CD8-positive, alpha-beta T cell (primary cell): ENCODE measurements at regions of chr1 and their contacts with region 1.

Region 1: GRCh38 chr1:54406339-54407153 is at the start of gene SSBP3:
- DNase-seq: peak; percentile 79 to 96 (median 92)
- ATAC-seq: peak; percentile 90
- H3K4me3 ChIP-seq: peak within 1 kb of the TSS; percentile 81 to 88
- H3K4me3 Mint-ChIP-seq: peak within 1 kb of the TSS; percentile 96
- H3K27ac ChIP-seq: peak within 1 kb of the TSS; percentile 55 to 76
- H3K27ac Mint-ChIP-seq: peak within 1 kb of the TSS; percentile 91
- H3K4me1 ChIP-seq: peaks cover 57% of the 10 kb centered on the region
- H3K4me1 Mint-ChIP-seq: peaks cover 64% of the 10 kb centered on the region
- H3K27me3 ChIP-seq: no peaks in the 10 kb centered on the region
- H3K27me3 Mint-ChIP-seq: no peaks in the 10 kb centered on the region
- CTCF ChIP-seq: no peak
- total RNA-seq, gene SSBP3: 41.5 to 47.7 TPM

Region 2: GRCh38 chr1:53014791-53015507 is 1391.6 kb before region 1 on chr1:
- CTCF ChIA-PET with region 1: no interaction called
- POLR2A ChIA-PET with region 1: no interaction called
- intact Hi-C with region 1: loop called in 1 of 2 experiments (anchors 10 kb)
- DNase-seq: peak; percentile 51 to 94 (median 79)
- ATAC-seq: peak; percentile 100
- H3K4me3 ChIP-seq: peak overlapping the region; percentile 67 to 68
- H3K4me3 Mint-ChIP-seq: peak overlapping the region; percentile 84
- H3K27ac ChIP-seq: peak overlapping the region; percentile 42 to 48
- H3K27ac Mint-ChIP-seq: peak overlapping the region; percentile 79
- H3K4me1 ChIP-seq: peaks cover 21% of the 10 kb centered on the region
- H3K4me1 Mint-ChIP-seq: peaks cover 38% of the 10 kb centered on the region
- H3K27me3 ChIP-seq: no peaks in the 10 kb centered on the region
- H3K27me3 Mint-ChIP-seq: no peaks in the 10 kb centered on the region
- CTCF ChIP-seq: no peak

Region 3: GRCh38 chr1:53889304-53890298 is 516.9 kb before region 1 on chr1 and contains the start of gene YIPF1:
- CTCF ChIA-PET with region 1: no interaction called
- POLR2A ChIA-PET with region 1: no interaction called
- intact Hi-C with region 1: loop called in 1 of 2 experiments (anchors 10 kb)
- DNase-seq: peak; percentile 68 to 92 (median 86)
- ATAC-seq: peak; percentile 98
- H3K4me3 ChIP-seq: peak within 1 kb of the TSS; percentile 69 to 97
- H3K4me3 Mint-ChIP-seq: peak within 1 kb of the TSS; percentile 94
- H3K27ac ChIP-seq: peak within 1 kb of the TSS; percentile 42 to 56
- H3K27ac Mint-ChIP-seq: peak within 1 kb of the TSS; percentile 94
- H3K4me1 ChIP-seq: peaks cover 19% of the 10 kb centered on the region
- H3K4me1 Mint-ChIP-seq: peaks cover 49% of the 10 kb centered on the region
- H3K27me3 ChIP-seq: no peaks in the 10 kb centered on the region
- H3K27me3 Mint-ChIP-seq: no peaks in the 10 kb centered on the region
- CTCF ChIP-seq: no peak
- total RNA-seq, gene YIPF1: 4.6 to 5.4 TPM

Region 4: DNA sequence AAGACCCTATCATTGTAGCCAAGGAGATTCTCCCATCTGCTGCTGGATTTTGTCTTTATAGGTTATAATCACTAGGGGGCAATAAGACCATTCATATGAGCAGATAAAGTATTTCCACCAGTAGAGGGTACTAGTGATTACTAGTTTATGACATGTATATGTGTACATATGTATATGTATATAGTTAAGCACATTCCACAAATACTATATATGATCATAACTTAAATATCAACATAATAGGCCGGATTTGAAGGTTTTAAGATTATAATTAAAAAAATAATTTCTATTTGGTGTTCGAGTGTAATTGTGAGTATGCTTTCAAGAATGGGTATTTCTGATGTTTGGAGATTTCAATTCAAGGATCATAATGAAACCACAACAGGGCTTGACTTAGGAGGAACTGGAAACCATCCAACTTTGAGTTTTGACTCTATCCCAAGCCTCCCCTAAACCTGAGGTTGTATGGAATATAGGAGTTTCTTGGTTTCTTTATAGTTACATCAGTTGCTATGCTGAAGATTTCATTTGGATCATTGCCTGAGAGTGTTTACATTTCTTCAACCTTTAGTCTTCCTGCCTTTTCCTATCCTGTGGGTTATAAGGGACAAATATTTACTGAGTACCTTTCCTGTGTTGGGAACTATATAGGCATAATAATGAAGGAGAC is 336.2 kb before region 1 on chr1:
- CTCF ChIA-PET with region 1: no interaction called
- POLR2A ChIA-PET with region 1: no interaction called
- intact Hi-C with region 1: loop called (anchors 5 kb)
- DNase-seq: peak in 2 of 9 experiments; percentile 62 to 75
- ATAC-seq: peak; percentile 89
- H3K4me3 ChIP-seq: no peak overlapping the region
- H3K4me3 Mint-ChIP-seq: no peak overlapping the region
- H3K27ac ChIP-seq: no peak overlapping the region
- H3K27ac Mint-ChIP-seq: no peak overlapping the region
- H3K4me1 ChIP-seq: no peaks in the 10 kb centered on the region
- H3K4me1 Mint-ChIP-seq: no peaks in the 10 kb centered on the region
- H3K27me3 ChIP-seq: no peaks in the 10 kb centered on the region
- H3K27me3 Mint-ChIP-seq: no peaks in the 10 kb centered on the region
- CTCF ChIP-seq: peak; percentile 85

Region 5: GRCh38 chr1:54273092-54273794 is 133.3 kb before region 1 on chr1:
- CTCF ChIA-PET with region 1: no interaction called
- POLR2A ChIA-PET with region 1: interaction called, 3 read pairs
- intact Hi-C with region 1: loop called in 1 of 2 experiments (anchors 5 kb)
- DNase-seq: peak in 1 of 9 experiments; percentile 35
- ATAC-seq: peak; percentile 44
- H3K4me3 ChIP-seq: no peak overlapping the region
- H3K4me3 Mint-ChIP-seq: no peak overlapping the region
- H3K27ac ChIP-seq: no peak overlapping the region
- H3K27ac Mint-ChIP-seq: peak overlapping the region; percentile 27
- H3K4me1 ChIP-seq: peaks cover 17% of the 10 kb centered on the region
- H3K4me1 Mint-ChIP-seq: peaks cover 56% of the 10 kb centered on the region
- H3K27me3 ChIP-seq: no peaks in the 10 kb centered on the region
- H3K27me3 Mint-ChIP-seq: no peaks in the 10 kb centered on the region
- CTCF ChIP-seq: no peak

Region 6: DNA sequence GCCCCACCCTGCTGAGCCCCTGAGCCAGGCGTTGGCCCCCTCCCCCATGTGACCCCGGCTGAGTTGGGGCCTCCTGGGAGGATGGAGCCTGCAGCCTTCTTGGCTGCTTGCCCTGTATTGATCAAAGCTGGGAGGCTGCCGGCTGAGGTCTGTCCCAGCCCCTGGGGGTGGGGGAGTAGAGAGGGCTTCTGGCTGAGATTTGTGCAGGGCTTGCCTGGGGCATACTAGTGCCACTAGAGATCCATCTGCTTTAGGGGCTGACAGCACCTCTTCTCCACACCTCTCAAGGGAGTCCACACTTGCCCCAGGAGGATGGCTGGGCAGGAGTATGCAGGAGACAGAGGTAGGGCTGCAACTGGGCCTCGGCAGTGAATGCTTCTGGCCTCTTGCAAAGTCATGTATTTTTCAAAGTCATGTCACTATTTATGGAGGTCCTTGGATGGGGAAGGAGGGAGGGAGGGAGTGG is 53.2 kb after region 1 on chr1:
- CTCF ChIA-PET with region 1: interaction called, 3 read pairs
- POLR2A ChIA-PET with region 1: no interaction called
- intact Hi-C with region 1: loop called in 1 of 2 experiments (anchors 2 kb)
- DNase-seq: peak in 2 of 9 experiments; percentile 20 to 31
- ATAC-seq: peak; percentile 36
- H3K4me3 ChIP-seq: peak overlapping the region in 1 of 2 experiments; percentile 30
- H3K4me3 Mint-ChIP-seq: peak overlapping the region; percentile 51
- H3K27ac ChIP-seq: peak overlapping the region in 1 of 2 experiments; percentile 45
- H3K27ac Mint-ChIP-seq: peak overlapping the region; percentile 83
- H3K4me1 ChIP-seq: peaks cover 41% of the 10 kb centered on the region
- H3K4me1 Mint-ChIP-seq: peaks cover 49% of the 10 kb centered on the region
- H3K27me3 ChIP-seq: no peaks in the 10 kb centered on the region
- H3K27me3 Mint-ChIP-seq: no peaks in the 10 kb centered on the region
- CTCF ChIP-seq: no peak

Region 7: DNA sequence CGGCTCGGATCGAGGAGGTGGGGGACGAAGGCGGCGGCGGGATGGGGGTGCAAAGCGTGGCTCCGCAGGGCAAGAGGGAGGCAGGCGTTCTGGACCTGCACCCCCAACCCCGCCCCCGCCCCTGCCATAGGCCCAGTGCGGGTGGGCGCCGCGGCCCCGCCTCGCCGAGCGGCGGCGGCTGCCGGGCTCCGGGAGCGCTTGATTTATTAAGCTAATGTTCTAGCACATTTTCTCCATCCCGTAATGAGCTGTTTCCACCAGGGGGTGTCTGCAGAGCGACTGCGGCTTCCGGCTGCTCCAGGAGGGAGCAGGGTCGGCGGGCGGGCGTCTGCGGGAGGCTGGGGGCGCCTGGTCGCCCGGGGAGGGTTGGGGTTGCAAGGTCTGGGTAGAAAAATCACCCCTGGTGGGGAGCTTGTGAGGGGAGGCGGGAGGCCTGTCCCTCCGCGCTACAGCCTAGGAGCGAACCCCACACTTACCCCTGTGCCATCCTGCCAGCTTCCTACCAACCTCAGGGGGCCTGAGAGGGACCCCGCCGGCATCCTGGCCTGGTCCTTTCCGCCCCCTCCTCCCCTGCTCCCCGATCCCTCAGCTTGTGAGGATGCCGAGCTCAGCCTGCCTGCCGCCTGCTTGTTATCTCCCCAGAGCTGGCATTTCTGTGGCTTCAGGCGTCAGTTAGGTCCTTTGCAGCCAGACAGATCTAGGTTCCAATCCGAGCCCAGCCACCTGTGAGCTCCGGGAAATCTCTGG is 93.0 kb after region 1 on chr1:
- CTCF ChIA-PET with region 1: no interaction called
- POLR2A ChIA-PET with region 1: no interaction called
- intact Hi-C with region 1: no loop called
- DNase-seq: peak in 5 of 9 experiments; percentile 42 to 64 (median 54)
- ATAC-seq: peak; percentile 73
- H3K4me3 ChIP-seq: peak overlapping the region; percentile 22 to 43
- H3K4me3 Mint-ChIP-seq: peak overlapping the region; percentile 75
- H3K27ac ChIP-seq: no peak overlapping the region
- H3K27ac Mint-ChIP-seq: no peak overlapping the region
- H3K4me1 ChIP-seq: peaks cover 12% of the 10 kb centered on the region
- H3K4me1 Mint-ChIP-seq: peaks cover 8% of the 10 kb centered on the region
- H3K27me3 ChIP-seq: peaks cover 9 to 10% of the 10 kb centered on the region in 2 experiments
- H3K27me3 Mint-ChIP-seq: peaks cover 36% of the 10 kb centered on the region
- CTCF ChIP-seq: peak; percentile 34

Region 8: GRCh38 chr1:54623230-54624007 is 216.9 kb after region 1 on chr1 and contains the start of gene FAM151A:
- CTCF ChIA-PET with region 1: no interaction called
- POLR2A ChIA-PET with region 1: no interaction called
- intact Hi-C with region 1: no loop called
- DNase-seq: no peak
- ATAC-seq: no peak
- H3K4me3 ChIP-seq: no peak within 1 kb of the TSS
- H3K4me3 Mint-ChIP-seq: no peak within 1 kb of the TSS
- H3K27ac ChIP-seq: no peak within 1 kb of the TSS
- H3K27ac Mint-ChIP-seq: no peak within 1 kb of the TSS
- H3K4me1 ChIP-seq: no peaks in the 10 kb centered on the region
- H3K4me1 Mint-ChIP-seq: no peaks in the 10 kb centered on the region
- H3K27me3 ChIP-seq: no peaks in the 10 kb centered on the region
- H3K27me3 Mint-ChIP-seq: peaks cover 9% of the 10 kb centered on the region
- CTCF ChIP-seq: no peak
- total RNA-seq, gene FAM151A: not detected

Region 9: GRCh38 chr1:54715493-54716298 is 309.1 kb after region 1 on chr1 and contains the start of gene TTC4:
- CTCF ChIA-PET with region 1: no interaction called
- POLR2A ChIA-PET with region 1: no interaction called
- intact Hi-C with region 1: loop called in 1 of 2 experiments (anchors 5 kb)
- DNase-seq: peak; percentile 68 to 92 (median 82)
- ATAC-seq: peak; percentile 98
- H3K4me3 ChIP-seq: peak within 1 kb of the TSS; percentile 77 to 95
- H3K4me3 Mint-ChIP-seq: peak within 1 kb of the TSS; percentile 86
- H3K27ac ChIP-seq: peak within 1 kb of the TSS; percentile 59 to 60
- H3K27ac Mint-ChIP-seq: peak within 1 kb of the TSS; percentile 85
- H3K4me1 ChIP-seq: peaks cover 18% of the 10 kb centered on the region
- H3K4me1 Mint-ChIP-seq: peaks cover 33% of the 10 kb centered on the region
- H3K27me3 ChIP-seq: no peaks in the 10 kb centered on the region
- H3K27me3 Mint-ChIP-seq: no peaks in the 10 kb centered on the region
- CTCF ChIP-seq: no peak
- total RNA-seq, gene TTC4: 7.8 to 7.9 TPM